ENCODE measurements at regions of chr2 and their contacts with region 1.

Region 1: GRCh38 chr2:60104514-60105505 is 448.6 kb downstream of the BCL11A start:
- DNase-seq: no peak

Region 2: DNA sequence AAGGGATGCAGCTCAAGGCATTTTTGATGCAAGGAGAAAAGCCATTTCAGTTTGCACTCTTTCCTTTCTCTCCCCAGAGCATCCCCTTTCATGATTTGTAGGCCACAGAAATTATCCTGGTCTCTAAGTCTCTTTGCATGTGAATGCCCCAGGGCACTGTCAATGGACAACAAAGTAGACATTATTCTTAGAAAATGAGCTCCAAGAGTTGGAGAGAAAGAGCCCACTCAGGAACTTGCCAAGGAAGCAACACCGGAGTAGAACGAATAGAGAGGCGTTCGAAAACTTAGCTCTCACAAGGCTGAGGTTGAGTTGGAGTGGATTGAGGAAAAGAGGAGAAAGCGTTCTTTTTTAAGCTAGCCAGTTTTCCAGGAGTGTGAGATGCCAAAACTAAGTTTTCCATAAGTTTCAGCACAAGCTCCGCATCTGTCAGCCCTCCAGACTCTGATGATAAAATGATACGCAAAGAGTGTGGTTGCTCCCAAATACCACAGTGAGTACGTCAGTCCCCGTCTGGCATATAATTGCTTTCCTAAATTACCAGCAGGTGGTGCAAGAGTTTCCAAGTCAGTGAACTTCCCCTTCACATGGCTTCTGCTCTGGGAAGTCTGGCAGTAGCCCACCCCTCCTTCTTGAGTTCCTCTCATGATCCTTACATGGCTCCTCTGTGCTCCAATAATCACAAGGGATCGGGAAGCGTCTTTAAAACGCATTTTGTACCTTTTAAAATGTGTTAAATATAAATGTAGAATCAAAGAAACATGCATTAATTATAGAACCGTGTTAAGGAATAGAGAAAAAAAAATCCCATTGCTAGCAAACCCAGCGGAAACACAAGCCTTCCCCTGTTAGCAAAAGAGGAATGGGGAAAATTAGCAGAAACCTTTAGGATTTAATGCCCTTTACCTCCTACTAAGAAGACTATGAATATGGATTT is 803.1 kb before region 1 on chr2:
- intact Hi-C with region 1: loop called (anchors 5 kb)
- DNase-seq: no peak